Natural killer cell (primary cell): ENCODE measurements at regions of chr10 and their contacts with region 1.

Region 1: DNA sequence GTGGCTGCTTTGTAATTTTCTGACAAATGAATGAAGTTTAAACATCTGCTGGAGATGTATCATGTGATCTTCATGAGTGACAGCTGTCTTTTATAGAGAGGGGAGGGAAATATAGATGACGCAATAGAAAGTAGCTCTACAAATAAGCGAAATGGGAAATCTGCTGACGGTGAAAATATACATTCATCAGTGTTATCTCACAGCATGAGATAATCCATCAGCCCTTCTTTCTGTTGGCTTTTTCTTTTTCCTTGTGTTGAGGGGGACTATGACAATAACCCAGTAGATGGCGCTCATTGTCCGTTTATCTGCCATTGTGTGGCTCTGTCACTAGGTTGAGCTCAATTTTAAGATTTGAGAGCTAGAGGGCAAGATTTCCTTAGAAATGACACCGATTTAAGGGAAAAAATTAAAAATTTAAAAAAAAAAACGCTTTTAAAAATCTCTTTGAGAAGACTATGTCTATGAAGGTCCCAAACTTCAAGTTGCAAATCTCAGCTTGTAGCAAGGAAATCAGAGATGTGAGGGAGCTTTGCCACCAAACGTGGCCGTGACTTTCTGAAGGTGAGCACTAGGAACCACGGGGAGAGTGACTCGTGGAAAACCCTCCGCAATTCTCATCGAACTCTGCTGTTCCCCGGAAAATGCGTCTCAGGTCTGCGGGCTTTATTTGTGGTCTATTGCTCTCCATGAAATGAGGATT is 114.6 kb upstream of the SFMBT2 start:
- DNase-seq: peak in 1 of 2 donors; percentile 89
- ATAC-seq: peak; percentile 80 to 94 (median 82)
- H3K4me3 ChIP-seq: no peak overlapping the region
- H3K4me3 Mint-ChIP-seq: no peak overlapping the region
- H3K27ac ChIP-seq: no peak overlapping the region
- H3K27ac Mint-ChIP-seq: no peak overlapping the region
- H3K4me1 ChIP-seq: peaks cover 4% of the 10 kb centered on the region
- H3K4me1 Mint-ChIP-seq: peaks cover 5% of the 10 kb centered on the region in 2 donors
- H3K27me3 ChIP-seq: peaks cover 4% of the 10 kb centered on the region
- H3K27me3 Mint-ChIP-seq: peaks cover 0 to 14% of the 10 kb centered on the region in 2 donors
- CTCF ChIP-seq: peak; percentile 76

Region 2: GRCh38 chr10:7687228-7687907 is 161.9 kb after region 1 on chr10:
- intact Hi-C with region 1: loop called (anchors 1 kb)
- DNase-seq: peak; percentile 44 to 89
- ATAC-seq: peak; percentile 81 to 98 (median 90)
- H3K4me3 ChIP-seq: no peak overlapping the region
- H3K4me3 Mint-ChIP-seq: no peak overlapping the region
- H3K27ac ChIP-seq: no peak overlapping the region
- H3K27ac Mint-ChIP-seq: no peak overlapping the region
- H3K4me1 ChIP-seq: no peaks in the 10 kb centered on the region
- H3K4me1 Mint-ChIP-seq: peaks cover 5% of the 10 kb centered on the region in 2 donors
- H3K27me3 ChIP-seq: no peaks in the 10 kb centered on the region
- H3K27me3 Mint-ChIP-seq: peaks cover 40 to 45% of the 10 kb centered on the region in 2 donors
- CTCF ChIP-seq: peak; percentile 70

Region 3: DNA sequence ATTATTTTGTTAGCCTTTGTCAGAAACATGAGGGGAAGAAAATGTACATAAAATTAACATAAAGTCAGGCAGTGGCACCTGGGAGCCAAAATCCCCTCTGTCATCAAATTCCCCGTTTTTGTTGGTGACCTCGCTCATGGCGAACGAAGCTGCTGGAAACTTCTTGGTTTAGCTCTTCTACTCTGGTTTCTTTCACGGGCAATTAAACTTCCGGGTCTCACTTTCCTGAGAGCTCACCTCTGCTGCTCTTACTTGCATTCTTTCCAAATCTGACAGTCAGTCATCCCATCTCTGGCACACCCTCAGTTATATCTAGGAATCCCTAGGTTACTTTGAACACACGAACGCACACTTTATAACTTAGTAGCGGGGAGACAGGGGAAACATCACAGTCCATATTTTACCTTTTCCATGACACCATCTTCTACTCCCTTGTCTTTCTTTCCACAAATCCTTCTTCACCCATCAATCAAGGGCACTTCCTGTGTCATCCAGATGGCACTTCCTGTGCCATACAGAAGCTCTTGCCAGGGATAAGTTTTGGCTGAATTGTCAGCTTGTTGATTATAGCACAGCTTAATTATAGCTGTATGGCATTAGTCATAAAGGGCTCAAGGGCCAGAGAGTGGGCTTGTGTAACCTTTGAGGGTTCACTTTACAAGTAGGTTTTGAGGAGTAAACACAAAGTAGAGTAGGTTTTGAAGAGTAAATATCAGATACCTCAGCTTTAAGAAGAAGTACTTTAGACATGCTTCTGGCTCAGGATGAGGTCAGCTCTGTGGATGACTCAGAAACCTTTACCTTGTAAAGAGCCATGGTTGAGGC is 634.1 kb after region 1 on chr10:
- intact Hi-C with region 1: no loop called
- DNase-seq: no peak
- ATAC-seq: no peak
- H3K4me3 ChIP-seq: no peak overlapping the region
- H3K4me3 Mint-ChIP-seq: no peak overlapping the region
- H3K27ac ChIP-seq: no peak overlapping the region
- H3K27ac Mint-ChIP-seq: no peak overlapping the region
- H3K4me1 ChIP-seq: no peaks in the 10 kb centered on the region
- H3K4me1 Mint-ChIP-seq: peaks cover 0 to 6% of the 10 kb centered on the region in 2 donors
- H3K27me3 ChIP-seq: no peaks in the 10 kb centered on the region
- H3K27me3 Mint-ChIP-seq: peaks cover 8% of the 10 kb centered on the region in 2 donors
- CTCF ChIP-seq: no peak

Region 4: GRCh38 chr10:9302120-9302746 is 1776.8 kb after region 1 on chr10:
- intact Hi-C with region 1: loop called (anchors 5 kb)
- DNase-seq: peak in 1 of 2 donors; percentile 71
- ATAC-seq: peak in 1 of 3 donors; percentile 59
- H3K4me3 ChIP-seq: no peak overlapping the region
- H3K4me3 Mint-ChIP-seq: no peak overlapping the region
- H3K27ac ChIP-seq: no peak overlapping the region
- H3K27ac Mint-ChIP-seq: no peak overlapping the region
- H3K4me1 ChIP-seq: no peaks in the 10 kb centered on the region
- H3K4me1 Mint-ChIP-seq: no peaks in the 10 kb centered on the region
- H3K27me3 ChIP-seq: peaks cover 2% of the 10 kb centered on the region
- H3K27me3 Mint-ChIP-seq: peaks cover 6 to 14% of the 10 kb centered on the region in 2 donors
- CTCF ChIP-seq: peak; percentile 38